Endothelial cell of umbilical vein (primary cell): ENCODE measurements at regions of chr3 and their contacts with region 1.

Region 1: DNA sequence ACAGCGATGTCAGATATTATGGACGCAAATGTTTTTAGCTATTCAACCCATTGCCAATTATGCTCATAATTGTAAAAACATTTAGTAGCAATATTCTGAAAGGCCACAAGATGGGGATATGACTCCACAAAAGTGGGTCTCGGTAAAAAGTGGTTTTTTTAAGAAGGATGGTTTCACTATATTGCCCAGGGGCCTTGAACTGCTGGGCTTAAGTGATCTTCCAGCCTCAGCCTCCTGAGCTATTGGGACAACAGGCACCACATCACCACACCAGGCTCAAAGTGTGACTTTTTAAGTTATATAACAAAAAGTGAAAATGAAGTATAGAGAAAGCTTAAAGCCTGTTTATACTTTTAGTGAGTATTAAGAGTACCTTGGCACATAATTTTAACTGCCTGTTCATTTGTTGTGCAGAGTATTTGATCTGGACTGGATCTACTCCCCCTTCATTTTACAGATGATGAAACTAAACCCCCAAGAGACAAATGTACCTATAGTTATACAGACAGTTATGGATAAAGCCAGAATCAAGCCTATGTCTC is 9.4 kb downstream of the NAA50 start:
- DNase-seq: peak; percentile 79
- H3K4me3 ChIP-seq: no peak overlapping the region
- H3K27ac ChIP-seq: no peak overlapping the region
- H3K4me1 ChIP-seq: peaks cover 10% of the 10 kb centered on the region
- H3K27me3 ChIP-seq: no peaks in the 10 kb centered on the region
- CTCF ChIP-seq: peak; percentile 28 to 47
- POLR2A ChIP-seq: no peak

Region 2: GRCh38 chr3:113844622-113845222 is 108.1 kb after region 1 on chr3:
- CTCF ChIA-PET with region 1: interaction called, 30 read pairs
- POLR2A ChIA-PET with region 1: no interaction called
- dilution Hi-C with region 1: no loop called
- intact Hi-C with region 1: no loop called
- DNase-seq: peak; percentile 63
- H3K4me3 ChIP-seq: no peak overlapping the region
- H3K27ac ChIP-seq: no peak overlapping the region
- H3K4me1 ChIP-seq: no peaks in the 10 kb centered on the region
- H3K27me3 ChIP-seq: no peaks in the 10 kb centered on the region
- CTCF ChIP-seq: peak; percentile 34 to 46
- POLR2A ChIP-seq: no peak

Region 3: DNA sequence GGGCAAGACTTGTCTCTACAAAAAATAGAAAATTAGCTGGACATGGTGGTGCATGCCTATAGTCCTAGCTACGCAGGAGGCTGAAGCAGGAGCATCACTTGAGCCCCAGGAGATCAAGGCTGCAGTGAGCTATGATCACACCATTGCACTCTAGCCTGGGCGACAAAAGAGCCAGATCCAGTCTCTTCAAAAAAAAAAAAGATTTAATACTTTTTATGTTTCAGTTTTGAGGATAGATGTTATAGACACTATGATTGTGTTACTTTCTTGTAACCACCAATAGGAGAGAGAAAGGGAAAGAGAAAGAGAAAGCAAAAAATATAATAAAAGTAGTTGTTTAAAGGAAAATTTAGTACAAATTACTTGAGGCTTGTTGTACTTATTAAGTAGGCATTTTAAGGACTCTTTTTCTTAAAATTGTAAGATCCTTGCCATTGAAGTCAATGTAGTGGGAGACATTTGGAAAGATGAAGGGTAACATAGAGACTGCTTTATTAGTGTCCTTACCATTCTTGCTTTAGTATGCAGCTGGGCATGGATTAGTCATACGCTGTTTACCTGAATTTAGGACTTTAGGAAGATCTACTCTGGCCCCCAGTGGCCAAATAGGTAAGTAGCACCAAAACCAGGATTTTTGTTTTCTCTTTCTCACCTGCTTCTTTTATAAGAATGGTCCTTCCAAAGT is 176.1 kb after region 1 on chr3:
- CTCF ChIA-PET with region 1: interaction called, 15 read pairs
- POLR2A ChIA-PET with region 1: no interaction called
- dilution Hi-C with region 1: no loop called
- intact Hi-C with region 1: loop called (anchors 1 kb)
- DNase-seq: peak; percentile 66
- H3K4me3 ChIP-seq: no peak overlapping the region
- H3K27ac ChIP-seq: no peak overlapping the region
- H3K4me1 ChIP-seq: no peaks in the 10 kb centered on the region
- H3K27me3 ChIP-seq: no peaks in the 10 kb centered on the region
- CTCF ChIP-seq: peak; percentile 39 to 43
- POLR2A ChIP-seq: no peak

Region 4: GRCh38 chr3:113927556-113927955 is 190.9 kb after region 1 on chr3:
- CTCF ChIA-PET with region 1: no interaction called
- POLR2A ChIA-PET with region 1: no interaction called
- dilution Hi-C with region 1: no loop called
- intact Hi-C with region 1: no loop called
- DNase-seq: no peak
- H3K4me3 ChIP-seq: no peak overlapping the region
- H3K27ac ChIP-seq: no peak overlapping the region
- H3K4me1 ChIP-seq: no peaks in the 10 kb centered on the region
- H3K27me3 ChIP-seq: no peaks in the 10 kb centered on the region
- CTCF ChIP-seq: no peak
- POLR2A ChIP-seq: no peak

Region 5: DNA sequence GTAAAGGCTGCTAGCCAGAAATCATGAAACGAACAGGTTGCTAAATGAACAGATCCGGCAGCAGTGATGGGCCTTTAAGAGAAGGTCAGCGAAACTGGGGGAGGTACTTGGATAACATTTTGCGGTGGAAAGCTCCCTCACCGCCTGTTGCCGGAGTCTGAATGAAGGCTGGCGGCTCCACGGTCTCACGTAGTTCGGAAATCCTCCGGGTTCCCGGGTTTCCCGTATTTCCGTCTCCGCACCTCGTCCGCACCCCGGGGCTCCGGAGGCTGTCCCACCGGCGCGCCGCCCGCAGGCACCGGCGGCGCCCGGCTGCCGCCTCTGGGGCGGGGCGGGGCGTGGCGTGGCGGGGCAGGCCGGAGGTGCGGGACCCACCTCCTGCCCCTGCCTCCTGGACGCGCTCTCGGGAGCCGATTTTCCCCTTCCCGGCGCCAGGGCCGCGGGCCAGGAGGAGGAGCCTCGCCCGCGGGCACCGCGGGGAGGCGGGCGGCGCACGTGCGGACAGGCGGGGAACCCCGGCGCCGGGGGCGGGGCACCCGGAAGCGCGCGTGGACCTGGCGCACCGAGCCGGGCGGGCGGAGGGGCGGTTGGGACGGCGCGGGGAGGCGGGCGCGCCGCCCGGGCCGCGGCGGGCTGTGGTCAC is 210.9 kb after region 1 on chr3 and contains the start of gene ZDHHC23:
- CTCF ChIA-PET with region 1: no interaction called
- POLR2A ChIA-PET with region 1: no interaction called
- dilution Hi-C with region 1: no loop called
- intact Hi-C with region 1: loop called (anchors 5 kb)
- DNase-seq: peak; percentile 36
- H3K4me3 ChIP-seq: peak within 1 kb of the TSS; percentile 4 to 63 (median 61)
- H3K27ac ChIP-seq: no peak within 1 kb of the TSS
- H3K4me1 ChIP-seq: peaks cover 7% of the 10 kb centered on the region
- H3K27me3 ChIP-seq: no peaks in the 10 kb centered on the region
- CTCF ChIP-seq: no peak
- POLR2A ChIP-seq: no peak
- total RNA-seq, gene ZDHHC23: 1.9 and 3.2 TPM in 2 replicates

Region 6: GRCh38 chr3:114179575-114179974 is 443.0 kb after region 1 on chr3:
- CTCF ChIA-PET with region 1: interaction called, 15 read pairs
- POLR2A ChIA-PET with region 1: no interaction called
- dilution Hi-C with region 1: no loop called
- intact Hi-C with region 1: no loop called
- DNase-seq: peak; percentile 19
- H3K4me3 ChIP-seq: no peak overlapping the region
- H3K27ac ChIP-seq: no peak overlapping the region
- H3K4me1 ChIP-seq: no peaks in the 10 kb centered on the region
- H3K27me3 ChIP-seq: peaks cover 12 to 24% of the 10 kb centered on the region in 2 experiments
- CTCF ChIP-seq: peak; percentile 14 to 30
- POLR2A ChIP-seq: no peak

Region 7: GRCh38 chr3:114299421-114299820 is 562.8 kb after region 1 on chr3:
- CTCF ChIA-PET with region 1: interaction called, 15 read pairs
- POLR2A ChIA-PET with region 1: no interaction called
- dilution Hi-C with region 1: no loop called
- intact Hi-C with region 1: loop called (anchors 5 kb)
- DNase-seq: peak; percentile 39
- H3K4me3 ChIP-seq: no peak overlapping the region
- H3K27ac ChIP-seq: no peak overlapping the region
- H3K4me1 ChIP-seq: no peaks in the 10 kb centered on the region
- H3K27me3 ChIP-seq: peaks cover 8% of the 10 kb centered on the region in 2 experiments
- CTCF ChIP-seq: peak; percentile 42 to 67
- POLR2A ChIP-seq: no peak